Activated CD8-positive, alpha-beta T cell treated with anti-CD3 and anti-CD28 coated beads, Interleukin-2, amount 10 ng/mL, durations not matched to agents 7 days and 5 days (primary cell): ENCODE measurements at regions of chr15 and their contacts with region 1.

Region 1: DNA sequence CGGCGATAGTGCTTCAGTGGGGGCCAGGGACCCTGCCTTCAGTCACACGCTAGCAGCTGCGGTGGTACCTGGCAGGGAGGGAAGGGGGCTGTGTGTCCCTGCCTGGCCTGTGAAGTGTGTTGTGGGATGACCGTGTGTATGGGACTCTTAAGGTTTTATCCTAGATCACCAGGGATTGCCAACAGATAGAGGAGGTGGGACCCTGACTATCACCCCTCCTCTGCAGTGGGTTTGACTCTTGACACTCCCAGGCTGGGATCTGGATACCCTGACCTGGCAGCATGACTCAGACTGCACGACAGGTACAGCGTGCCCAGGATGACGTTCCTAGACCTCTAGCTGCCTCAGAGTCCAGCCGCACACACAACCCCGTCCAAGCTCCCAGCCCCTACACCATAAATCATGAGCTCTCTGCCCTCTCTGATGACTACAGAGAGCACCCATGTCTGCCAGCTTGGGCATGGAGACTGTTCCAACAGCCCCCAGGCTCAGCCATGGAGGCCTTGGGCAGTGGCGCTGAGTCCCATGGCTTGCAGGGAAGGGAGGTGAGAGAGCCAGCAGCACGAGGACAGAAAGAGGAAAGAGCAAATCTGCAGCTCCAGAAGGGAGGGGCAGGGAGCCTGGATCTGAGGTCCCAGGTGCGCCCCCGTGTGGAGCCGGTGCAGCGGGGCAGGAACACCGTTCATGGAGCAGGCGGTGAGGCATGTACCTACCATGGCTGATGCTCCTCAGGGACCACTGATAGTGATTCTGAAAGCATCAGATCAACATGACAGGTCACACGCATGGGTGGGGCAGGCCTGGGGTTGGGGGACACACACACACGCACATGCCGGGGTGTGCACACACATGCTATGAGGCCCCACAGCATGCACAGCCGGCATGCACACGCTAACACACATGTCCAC is 71.0 kb downstream of the ADAMTS7 start:
- DNase-seq: peak; percentile 82
- ATAC-seq: peak; percentile 80
- H3K4me3 Mint-ChIP-seq: no peak overlapping the region
- H3K27ac Mint-ChIP-seq: no peak overlapping the region
- H3K4me1 Mint-ChIP-seq: peaks cover 5% of the 10 kb centered on the region
- H3K27me3 Mint-ChIP-seq: no peaks in the 10 kb centered on the region

Region 2: GRCh38 chr15:78750566-78750965 is 10.3 kb after region 1 on chr15:
- CTCF ChIA-PET with region 1: interaction called, 14 read pairs
- POLR2A ChIA-PET with region 1: no interaction called
- DNase-seq: no peak
- ATAC-seq: no peak
- H3K4me3 Mint-ChIP-seq: no peak overlapping the region
- H3K27ac Mint-ChIP-seq: no peak overlapping the region
- H3K4me1 Mint-ChIP-seq: peaks cover 4% of the 10 kb centered on the region
- H3K27me3 Mint-ChIP-seq: no peaks in the 10 kb centered on the region